Mammary epithelial cell (primary cell): ENCODE measurements at regions of chr2 and their contacts with region 1.

Region 1: DNA sequence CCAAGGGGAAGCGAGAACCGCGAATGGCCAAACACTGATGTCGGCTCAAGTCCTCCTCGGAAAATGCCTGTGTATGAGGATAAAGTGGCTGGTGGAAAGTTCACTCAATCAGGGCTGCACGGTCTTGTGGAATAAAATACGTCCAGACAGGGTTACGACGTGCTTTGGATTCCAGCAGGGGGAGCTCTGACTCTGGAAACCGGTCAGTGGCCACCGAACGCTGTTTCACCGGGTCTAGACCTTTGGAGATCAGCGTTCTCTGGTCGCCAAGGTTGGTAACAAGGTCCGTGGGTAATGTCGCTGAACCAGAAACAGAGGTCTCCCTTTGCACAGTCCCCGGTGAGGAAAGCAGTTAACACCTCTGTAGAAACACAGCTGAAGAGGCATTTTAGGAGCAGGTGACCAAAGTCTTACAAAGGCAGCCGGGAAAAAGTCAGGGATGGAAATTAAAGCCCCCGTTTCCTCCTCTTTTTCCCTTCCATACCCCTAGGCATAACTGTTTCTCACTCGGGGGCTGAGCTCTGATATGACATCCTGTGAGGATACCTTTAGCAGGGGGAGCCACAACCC is 47.8 kb downstream of the CDCA7 start:
- DNase-seq: peak; percentile 65
- H3K4me3 ChIP-seq: peak overlapping the region; percentile 23 to 33 (median 26)
- H3K27ac ChIP-seq: no peak overlapping the region
- H3K4me1 ChIP-seq: peaks cover 17% of the 10 kb centered on the region
- H3K27me3 ChIP-seq: no peaks in the 10 kb centered on the region
- CTCF ChIP-seq: peak; percentile 78 to 92

Region 2: DNA sequence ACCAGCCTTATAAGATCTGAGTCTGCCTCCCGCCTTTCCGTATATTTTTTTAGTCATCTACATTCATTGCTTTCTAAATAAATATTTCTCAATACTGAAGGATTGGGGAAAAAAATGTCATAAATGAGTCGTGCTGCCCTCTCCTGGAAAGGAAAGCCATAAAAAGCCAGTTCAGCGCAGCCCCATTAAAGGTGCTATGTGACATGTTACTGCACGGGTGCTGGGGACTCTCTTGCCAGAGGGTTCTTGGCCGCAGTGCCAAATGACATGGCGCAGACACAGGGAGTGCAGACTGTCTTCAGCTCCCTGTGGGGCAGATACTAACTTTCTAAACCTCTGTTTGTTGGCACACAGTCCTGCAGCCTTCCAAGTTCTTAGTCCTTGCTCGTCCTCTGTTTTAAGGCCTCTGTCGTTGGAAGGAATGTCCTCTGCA is 380.5 kb before region 1 on chr2:
- CTCF ChIA-PET with region 1: no interaction called
- dilution Hi-C with region 1: no loop called
- in situ Hi-C with region 1: no loop called
- intact Hi-C with region 1: loop called (anchors 1 kb)
- DNase-seq: peak; percentile 41
- H3K4me3 ChIP-seq: no peak overlapping the region
- H3K27ac ChIP-seq: no peak overlapping the region
- H3K4me1 ChIP-seq: no peaks in the 10 kb centered on the region
- H3K27me3 ChIP-seq: no peaks in the 10 kb centered on the region
- CTCF ChIP-seq: peak; percentile 55 to 61

Region 3: GRCh38 chr2:173119069-173119807 is 283.3 kb before region 1 on chr2:
- CTCF ChIA-PET with region 1: no interaction called
- dilution Hi-C with region 1: no loop called
- in situ Hi-C with region 1: no loop called
- intact Hi-C with region 1: no loop called
- DNase-seq: no peak
- H3K4me3 ChIP-seq: no peak overlapping the region
- H3K27ac ChIP-seq: peak overlapping the region; percentile 53
- H3K4me1 ChIP-seq: peaks cover 24% of the 10 kb centered on the region
- H3K27me3 ChIP-seq: no peaks in the 10 kb centered on the region
- CTCF ChIP-seq: no peak

Region 4: GRCh38 chr2:173210270-173211196 is 192.0 kb before region 1 on chr2:
- CTCF ChIA-PET with region 1: no interaction called
- dilution Hi-C with region 1: no loop called
- in situ Hi-C with region 1: no loop called
- intact Hi-C with region 1: loop called (anchors 2 kb)
- DNase-seq: peak; percentile 88
- H3K4me3 ChIP-seq: no peak overlapping the region
- H3K27ac ChIP-seq: peak overlapping the region; percentile 72
- H3K4me1 ChIP-seq: peaks cover 17% of the 10 kb centered on the region
- H3K27me3 ChIP-seq: no peaks in the 10 kb centered on the region
- CTCF ChIP-seq: peak; percentile 81 to 88

Region 5: DNA sequence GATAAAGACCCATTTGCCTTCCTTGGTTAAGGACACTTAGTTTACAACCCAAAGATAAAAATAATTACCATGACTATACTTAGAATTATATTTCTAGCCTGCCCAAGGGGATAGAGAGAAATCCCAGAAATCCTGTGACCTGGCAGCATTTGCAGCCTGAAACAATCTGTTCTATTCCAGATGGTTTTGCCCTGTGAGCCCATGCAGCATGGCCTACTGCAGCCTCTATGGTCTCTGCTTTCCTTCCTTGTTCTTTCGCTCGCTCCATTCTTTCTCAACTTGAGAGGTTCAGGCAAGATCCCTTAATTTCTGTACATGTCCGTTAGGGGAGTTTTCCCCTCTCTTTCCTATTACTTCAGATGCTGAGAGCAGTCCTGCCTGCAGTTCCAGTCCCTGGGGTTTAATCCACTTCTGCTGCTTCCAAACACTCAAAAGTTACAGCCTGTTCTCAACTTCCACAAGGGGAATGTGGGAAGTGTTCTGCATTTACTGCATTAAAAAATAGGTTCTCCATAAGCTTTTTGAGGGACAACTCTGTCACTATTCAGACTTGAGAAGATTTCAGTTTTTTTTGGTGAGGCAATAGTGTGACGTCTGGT is 32.4 kb after region 1 on chr2:
- CTCF ChIA-PET with region 1: no interaction called
- dilution Hi-C with region 1: no loop called
- in situ Hi-C with region 1: no loop called
- intact Hi-C with region 1: no loop called
- DNase-seq: no peak
- H3K4me3 ChIP-seq: no peak overlapping the region
- H3K27ac ChIP-seq: no peak overlapping the region
- H3K4me1 ChIP-seq: no peaks in the 10 kb centered on the region
- H3K27me3 ChIP-seq: peaks cover 26% of the 10 kb centered on the region
- CTCF ChIP-seq: no peak

Region 6: DNA sequence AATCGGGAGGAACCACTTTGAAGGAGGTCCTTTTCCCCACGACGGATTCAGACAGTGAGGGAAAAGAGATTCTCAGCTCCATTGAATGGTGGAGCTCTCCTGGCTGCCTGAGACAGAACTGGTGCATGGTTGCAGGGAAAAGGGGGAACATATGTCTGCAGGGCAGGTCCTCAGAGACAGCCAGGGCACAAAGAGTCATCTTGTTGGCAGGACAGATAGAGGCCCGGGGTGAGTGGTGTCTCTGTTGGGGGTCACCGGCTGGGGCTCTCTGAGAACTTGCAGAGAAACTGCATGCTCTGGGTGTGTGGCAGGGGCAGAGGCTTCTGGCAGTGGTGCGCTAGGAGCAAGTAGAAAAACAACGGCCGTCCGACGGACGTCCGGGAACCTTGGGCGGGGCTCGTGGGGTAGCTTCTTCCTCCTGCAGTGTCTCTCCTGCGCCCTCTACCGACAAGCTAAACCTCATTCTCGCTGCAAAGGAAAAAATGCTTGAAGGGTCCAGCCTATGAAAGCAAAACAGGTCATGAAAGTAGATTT is 46.5 kb after region 1 on chr2:
- CTCF ChIA-PET with region 1: interaction called, 13 read pairs
- dilution Hi-C with region 1: no loop called
- in situ Hi-C with region 1: loop called (anchors 5 kb)
- intact Hi-C with region 1: loop called (anchors 1 kb)
- DNase-seq: peak; percentile 74
- H3K4me3 ChIP-seq: peak overlapping the region in 1 of 3 experiments; percentile 20
- H3K27ac ChIP-seq: no peak overlapping the region
- H3K4me1 ChIP-seq: no peaks in the 10 kb centered on the region
- H3K27me3 ChIP-seq: no peaks in the 10 kb centered on the region
- CTCF ChIP-seq: peak; percentile 81 to 90

Region 7: GRCh38 chr2:173667417-173667816 is 264.9 kb after region 1 on chr2:
- CTCF ChIA-PET with region 1: no interaction called
- dilution Hi-C with region 1: no loop called
- in situ Hi-C with region 1: loop called in 1 of 2 experiments (anchors 25 kb)
- intact Hi-C with region 1: loop called (anchors 1 kb)
- DNase-seq: peak; percentile 60
- H3K4me3 ChIP-seq: no peak overlapping the region
- H3K27ac ChIP-seq: peak overlapping the region; percentile 58
- H3K4me1 ChIP-seq: peaks cover 20% of the 10 kb centered on the region
- H3K27me3 ChIP-seq: no peaks in the 10 kb centered on the region
- CTCF ChIP-seq: peak; percentile 55 to 70

Region 8: DNA sequence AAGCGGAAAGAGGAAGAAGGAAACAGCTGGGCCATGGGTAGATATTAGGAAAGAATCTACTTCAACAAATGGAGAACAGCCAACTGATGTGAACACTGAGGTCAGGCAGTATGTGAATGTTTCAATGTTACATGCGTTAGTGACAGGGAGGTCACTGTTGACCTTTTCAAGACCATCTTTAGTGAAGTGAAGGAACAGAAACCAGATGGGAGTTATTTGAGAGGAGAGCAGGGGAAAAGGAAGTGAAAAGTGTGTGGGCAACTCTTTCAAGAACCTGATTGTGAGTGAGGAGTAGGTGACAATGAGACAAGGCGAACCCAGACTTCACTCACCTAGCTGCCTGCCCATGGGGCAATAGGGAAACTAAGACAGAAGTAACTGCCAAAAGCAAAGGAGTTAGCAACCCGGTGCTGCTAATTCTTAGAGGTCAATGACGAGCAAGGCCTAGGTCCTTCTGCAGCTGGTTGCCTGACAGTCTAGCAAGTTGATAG is 495.7 kb after region 1 on chr2:
- CTCF ChIA-PET with region 1: no interaction called
- dilution Hi-C with region 1: no loop called
- in situ Hi-C with region 1: no loop called
- intact Hi-C with region 1: no loop called
- DNase-seq: no peak
- H3K4me3 ChIP-seq: no peak overlapping the region
- H3K27ac ChIP-seq: no peak overlapping the region
- H3K4me1 ChIP-seq: no peaks in the 10 kb centered on the region
- H3K27me3 ChIP-seq: no peaks in the 10 kb centered on the region
- CTCF ChIP-seq: no peak

Region 9: DNA sequence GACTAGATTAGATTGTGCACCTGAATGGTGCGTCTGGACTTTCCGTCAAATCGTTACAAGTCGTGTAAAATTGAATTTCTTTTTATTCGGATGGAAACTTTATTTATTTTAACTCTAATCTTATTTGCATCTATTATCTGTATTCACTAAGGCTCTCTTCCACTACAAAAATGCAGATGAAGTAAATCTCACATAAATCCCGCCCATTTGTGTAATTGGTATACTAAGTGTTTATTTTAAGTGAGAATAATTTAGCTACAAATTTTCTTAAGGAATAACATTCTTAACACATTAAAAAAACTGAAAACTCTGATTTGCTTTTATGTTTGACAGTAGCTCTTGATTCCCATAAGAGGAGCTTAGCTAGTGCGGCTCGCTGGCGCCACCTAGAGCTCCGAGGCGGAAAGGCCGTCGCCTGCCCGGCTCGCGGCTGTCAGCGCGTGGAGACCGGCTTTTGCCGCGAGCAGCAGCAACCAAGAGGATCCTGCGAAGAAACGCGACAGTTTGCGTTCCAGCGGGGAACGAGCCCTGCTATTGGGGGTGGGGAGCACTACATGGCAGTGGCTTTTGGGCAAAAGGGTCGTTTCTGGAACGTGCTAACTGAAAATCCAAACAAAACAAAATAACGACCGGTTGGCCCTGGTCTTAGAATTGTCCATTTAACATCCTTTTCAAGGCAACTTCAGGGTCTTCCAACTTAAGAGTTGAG is 939.0 kb after region 1 on chr2:
- CTCF ChIA-PET with region 1: no interaction called
- dilution Hi-C with region 1: no loop called
- in situ Hi-C with region 1: no loop called
- intact Hi-C with region 1: loop called (anchors 1 kb)
- DNase-seq: peak; percentile 73
- H3K4me3 ChIP-seq: peak overlapping the region; percentile 12 to 42 (median 16)
- H3K27ac ChIP-seq: no peak overlapping the region
- H3K4me1 ChIP-seq: peaks cover 39% of the 10 kb centered on the region
- H3K27me3 ChIP-seq: peaks cover 51% of the 10 kb centered on the region
- CTCF ChIP-seq: peak; percentile 96 to 99